Naive thymus-derived CD4-positive, alpha-beta T cell (primary cell): ENCODE measurements at regions of chr3 and their contacts with region 1.

Region 1: GRCh38 chr3:60076331-60076730 is 1026.5 kb upstream of the CFAP20DC start:
- DNase-seq: no peak
- ATAC-seq: no peak
- H3K4me3 ChIP-seq: peak overlapping the region; percentile 44
- H3K4me3 Mint-ChIP-seq: peak overlapping the region; percentile 64 to 97 (median 86)
- H3K27ac ChIP-seq: peak overlapping the region; percentile 86
- H3K27ac Mint-ChIP-seq: peak overlapping the region; percentile 78 to 98 (median 93)
- H3K4me1 ChIP-seq: peaks cover 7 to 45% of the 10 kb centered on the region in 2 donors
- H3K4me1 Mint-ChIP-seq: peaks cover 12 to 72% (median 64%) of the 10 kb centered on the region in 7 donors
- H3K27me3 ChIP-seq: no peaks in the 10 kb centered on the region
- H3K27me3 Mint-ChIP-seq: no peaks in the 10 kb centered on the region

Region 2: DNA sequence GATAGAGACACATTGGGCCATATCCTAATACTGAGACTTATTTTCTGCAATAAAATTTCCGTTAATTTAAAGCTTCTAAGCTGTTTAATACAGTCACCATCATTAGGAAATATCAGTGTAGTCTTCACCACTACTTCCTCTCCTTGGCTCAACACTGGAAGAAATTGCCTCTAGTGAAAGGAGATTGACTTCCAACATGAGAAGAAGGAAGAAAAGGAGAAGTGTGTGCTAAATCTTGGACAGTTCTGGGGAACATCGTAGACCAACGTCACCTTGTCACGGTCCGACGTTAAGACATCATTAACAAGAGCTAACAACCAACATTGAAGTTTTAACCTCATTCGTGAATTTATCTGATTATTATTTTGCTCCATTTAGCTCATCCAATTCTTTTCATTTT is 39.5 kb before region 1 on chr3:
- CTCF ChIA-PET with region 1: no interaction called
- POLR2A ChIA-PET with region 1: interaction called, 10 read pairs
- intact Hi-C with region 1: no loop called
- DNase-seq: no peak
- ATAC-seq: no peak
- H3K4me3 ChIP-seq: no peak overlapping the region
- H3K4me3 Mint-ChIP-seq: peak overlapping the region in 2 of 10 donors; percentile 27 to 28
- H3K27ac ChIP-seq: no peak overlapping the region
- H3K27ac Mint-ChIP-seq: peak overlapping the region in 8 of 9 donors; percentile 12 to 91 (median 59)
- H3K4me1 ChIP-seq: peaks cover 0 to 14% of the 10 kb centered on the region in 2 donors
- H3K4me1 Mint-ChIP-seq: peaks cover 0 to 89% (median 79%) of the 10 kb centered on the region in 7 donors
- H3K27me3 ChIP-seq: no peaks in the 10 kb centered on the region
- H3K27me3 Mint-ChIP-seq: no peaks in the 10 kb centered on the region